PC-9 (cell line): ENCODE measurements at regions of chr22 and their contacts with region 1.

Region 1: GRCh38 chr22:42994881-42995562 is 19.9 kb downstream of the PACSIN2 start:
- DNase-seq: peak; percentile 72 to 99
- H3K4me3 ChIP-seq: peak overlapping the region; percentile 47; the same call in 1 of the 2 replicates
- H3K27ac ChIP-seq: peak overlapping the region; percentile 98
- H3K4me1 ChIP-seq: peaks cover 83% of the 10 kb centered on the region
- H3K27me3 ChIP-seq: no peaks in the 10 kb centered on the region
- CTCF ChIP-seq: no peak

Region 2: GRCh38 chr22:42933481-42934091 is 61.4 kb before region 1 on chr22:
- CTCF ChIA-PET with region 1: no interaction called
- POLR2A ChIA-PET with region 1: no interaction called
- intact Hi-C with region 1: loop called (anchors 5 kb)
- DNase-seq: peak in 1 of 2 experiments; percentile 91
- H3K4me3 ChIP-seq: no peak overlapping the region
- H3K27ac ChIP-seq: peak overlapping the region; percentile 60
- H3K4me1 ChIP-seq: peaks cover 62% of the 10 kb centered on the region
- H3K27me3 ChIP-seq: no peaks in the 10 kb centered on the region
- CTCF ChIP-seq: no peak

Region 3: GRCh38 chr22:43014869-43015676 is 20.1 kb after region 1 on chr22 and contains the start of gene PACSIN2:
- CTCF ChIA-PET with region 1: interaction called, 12 read pairs
- POLR2A ChIA-PET with region 1: interaction called, 13 read pairs
- intact Hi-C with region 1: loop called (anchors 1 kb)
- DNase-seq: peak; percentile 97 to 99
- H3K4me3 ChIP-seq: peak within 1 kb of the TSS; percentile 66
- H3K27ac ChIP-seq: peak within 1 kb of the TSS; percentile 45
- H3K4me1 ChIP-seq: peaks cover 50% of the 10 kb centered on the region
- H3K27me3 ChIP-seq: no peaks in the 10 kb centered on the region
- CTCF ChIP-seq: no peak
- total RNA-seq, gene PACSIN2: 102 and 103 TPM in 2 replicates

Region 4: DNA sequence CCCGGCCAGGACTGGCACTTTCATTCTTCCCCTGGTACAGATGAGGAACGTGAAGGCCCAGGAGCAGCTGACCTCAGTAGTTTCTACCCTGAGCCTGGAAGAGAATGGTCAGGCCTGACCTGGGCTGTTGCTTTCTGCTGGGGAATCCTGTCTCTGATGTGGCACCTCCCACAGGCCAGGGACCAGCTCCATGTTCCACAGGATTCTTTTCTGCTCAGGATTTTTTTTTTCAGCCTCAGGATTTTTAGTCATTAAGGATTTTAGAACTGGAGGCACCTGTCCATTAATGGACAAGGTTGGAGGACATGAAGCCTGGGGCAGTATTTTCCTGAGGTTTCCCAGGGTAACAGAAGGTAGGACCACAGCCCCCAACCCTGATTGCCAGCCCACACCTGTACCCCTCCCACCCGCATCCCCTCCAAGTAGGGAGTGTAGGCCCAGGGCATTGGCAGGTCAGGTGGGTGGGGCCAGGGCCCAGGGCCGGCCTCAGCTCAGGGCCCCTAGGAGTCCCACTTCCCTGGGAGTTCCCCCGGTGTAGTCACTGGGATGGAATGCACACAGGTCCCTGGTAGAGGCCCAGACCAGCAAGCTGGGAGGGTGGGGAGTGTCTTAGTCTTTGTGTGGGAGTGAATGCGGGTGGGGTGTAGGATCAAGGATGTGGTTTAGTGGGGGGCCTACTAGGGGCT is 131.6 kb after region 1 on chr22:
- CTCF ChIA-PET with region 1: no interaction called
- POLR2A ChIA-PET with region 1: no interaction called
- intact Hi-C with region 1: loop called (anchors 10 kb)
- DNase-seq: peak; percentile 89 to 93
- H3K4me3 ChIP-seq: peak overlapping the region; percentile 10; the same call in 1 of the 2 replicates
- H3K27ac ChIP-seq: peak overlapping the region; percentile 92
- H3K4me1 ChIP-seq: peaks cover 46% of the 10 kb centered on the region
- H3K27me3 ChIP-seq: no peaks in the 10 kb centered on the region
- CTCF ChIP-seq: no peak

Region 5: DNA sequence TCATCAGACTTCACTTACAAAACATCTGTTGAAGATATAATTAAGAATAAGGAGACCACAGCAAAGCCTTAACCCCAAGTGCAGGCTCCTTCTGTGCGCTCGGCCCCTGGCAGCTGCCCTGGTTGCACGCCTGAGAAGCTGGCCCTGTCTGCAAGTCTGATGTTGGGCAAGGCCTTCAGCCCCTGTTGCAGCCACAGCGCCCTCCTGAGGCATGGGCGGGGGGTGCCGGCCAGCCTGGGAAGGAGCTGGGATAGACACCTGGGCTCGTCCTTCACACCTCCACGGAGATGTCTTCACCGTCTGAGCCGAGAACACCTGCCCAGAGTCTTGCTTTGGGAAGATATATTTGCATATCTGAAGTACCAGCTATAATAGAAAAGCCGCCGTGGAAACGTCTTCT is 520.9 kb after region 1 on chr22:
- CTCF ChIA-PET with region 1: no interaction called
- POLR2A ChIA-PET with region 1: no interaction called
- intact Hi-C with region 1: no loop called
- DNase-seq: no peak
- H3K4me3 ChIP-seq: no peak overlapping the region
- H3K27ac ChIP-seq: no peak overlapping the region
- H3K4me1 ChIP-seq: no peaks in the 10 kb centered on the region
- H3K27me3 ChIP-seq: peaks cover 94% of the 10 kb centered on the region
- CTCF ChIP-seq: no peak